Mammary epithelial cell (primary cell): ENCODE measurements at regions of chr5 and their contacts with region 1.

Region 1: GRCh38 chr5:143403593-143404415 is at the start of gene NR3C1:
- DNase-seq: peak; percentile 83
- H3K4me3 ChIP-seq: peak within 1 kb of the TSS; percentile 78 to 94 (median 83)
- H3K27ac ChIP-seq: peak within 1 kb of the TSS; percentile 97
- H3K4me1 ChIP-seq: peaks cover 11% of the 10 kb centered on the region
- H3K27me3 ChIP-seq: no peaks in the 10 kb centered on the region
- CTCF ChIP-seq: peak; percentile 10 to 42
- total RNA-seq, gene NR3C1: 62.8 to 64.4 TPM

Region 2: GRCh38 chr5:142922223-142922952 is 481.4 kb before region 1 on chr5:
- CTCF ChIA-PET with region 1: no interaction called
- dilution Hi-C with region 1: no loop called
- in situ Hi-C with region 1: loop called in 1 of 2 experiments (anchors 25 kb)
- intact Hi-C with region 1: loop called (anchors 1 kb)
- DNase-seq: no peak
- H3K4me3 ChIP-seq: no peak overlapping the region
- H3K27ac ChIP-seq: no peak overlapping the region
- H3K4me1 ChIP-seq: peaks cover 14% of the 10 kb centered on the region
- H3K27me3 ChIP-seq: no peaks in the 10 kb centered on the region
- CTCF ChIP-seq: peak; percentile 32 to 41

Region 3: DNA sequence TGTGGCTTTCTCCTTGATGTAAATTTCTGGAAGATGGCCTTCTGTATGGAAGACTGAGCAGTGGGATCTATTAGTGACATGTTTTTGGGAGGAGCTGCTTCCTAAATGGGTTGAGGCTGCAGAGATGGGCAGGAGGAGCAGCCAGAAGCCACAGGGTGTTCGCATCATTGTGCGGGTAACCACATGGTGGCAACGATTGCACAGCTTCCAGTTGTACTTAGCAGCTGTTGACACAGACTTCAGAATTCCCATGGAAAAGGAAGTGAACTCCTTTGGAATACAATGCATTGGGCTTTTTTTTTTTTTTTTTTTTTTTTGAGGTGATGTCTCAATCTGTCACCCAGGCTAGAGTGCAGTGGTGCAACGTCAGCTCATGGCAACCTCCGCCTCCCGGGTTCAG is 297.6 kb before region 1 on chr5:
- CTCF ChIA-PET with region 1: interaction called, 40 read pairs
- dilution Hi-C with region 1: no loop called
- in situ Hi-C with region 1: no loop called
- intact Hi-C with region 1: loop called (anchors 5 kb)
- DNase-seq: peak; percentile 53
- H3K4me3 ChIP-seq: no peak overlapping the region
- H3K27ac ChIP-seq: no peak overlapping the region
- H3K4me1 ChIP-seq: no peaks in the 10 kb centered on the region
- H3K27me3 ChIP-seq: no peaks in the 10 kb centered on the region
- CTCF ChIP-seq: peak in 1 of 2 donors; percentile 32

Region 4: GRCh38 chr5:143244000-143244736 is 159.6 kb before region 1 on chr5:
- CTCF ChIA-PET with region 1: no interaction called
- dilution Hi-C with region 1: no loop called
- in situ Hi-C with region 1: no loop called
- intact Hi-C with region 1: loop called (anchors 2 kb)
- DNase-seq: peak; percentile 95
- H3K4me3 ChIP-seq: peak overlapping the region; percentile 15 to 35 (median 31)
- H3K27ac ChIP-seq: peak overlapping the region; percentile 99
- H3K4me1 ChIP-seq: peaks cover 55% of the 10 kb centered on the region
- H3K27me3 ChIP-seq: no peaks in the 10 kb centered on the region
- CTCF ChIP-seq: no peak

Region 5: DNA sequence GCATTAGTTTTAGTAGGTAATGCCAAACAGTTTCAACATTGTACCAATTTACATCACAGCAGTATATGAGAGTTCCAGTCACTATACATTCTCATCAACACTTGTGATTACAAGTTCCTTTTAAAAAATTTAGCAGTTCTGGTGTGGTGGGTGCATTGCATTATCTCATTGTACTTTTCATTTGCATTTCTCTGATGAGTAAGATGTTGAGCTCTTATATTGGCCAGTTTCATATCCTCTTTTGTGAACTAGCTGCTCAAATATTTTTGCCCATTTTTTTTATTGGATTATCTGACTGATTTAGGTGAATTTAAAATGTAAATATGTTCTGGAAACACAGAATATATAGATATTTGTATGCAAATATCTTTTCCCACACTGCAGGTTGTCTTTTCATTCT is 160.6 kb after region 1 on chr5:
- CTCF ChIA-PET with region 1: no interaction called
- dilution Hi-C with region 1: no loop called
- in situ Hi-C with region 1: no loop called
- intact Hi-C with region 1: no loop called
- DNase-seq: no peak
- H3K4me3 ChIP-seq: no peak overlapping the region
- H3K27ac ChIP-seq: no peak overlapping the region
- H3K4me1 ChIP-seq: peaks cover 2% of the 10 kb centered on the region
- H3K27me3 ChIP-seq: peaks cover 2% of the 10 kb centered on the region
- CTCF ChIP-seq: no peak

Region 6: DNA sequence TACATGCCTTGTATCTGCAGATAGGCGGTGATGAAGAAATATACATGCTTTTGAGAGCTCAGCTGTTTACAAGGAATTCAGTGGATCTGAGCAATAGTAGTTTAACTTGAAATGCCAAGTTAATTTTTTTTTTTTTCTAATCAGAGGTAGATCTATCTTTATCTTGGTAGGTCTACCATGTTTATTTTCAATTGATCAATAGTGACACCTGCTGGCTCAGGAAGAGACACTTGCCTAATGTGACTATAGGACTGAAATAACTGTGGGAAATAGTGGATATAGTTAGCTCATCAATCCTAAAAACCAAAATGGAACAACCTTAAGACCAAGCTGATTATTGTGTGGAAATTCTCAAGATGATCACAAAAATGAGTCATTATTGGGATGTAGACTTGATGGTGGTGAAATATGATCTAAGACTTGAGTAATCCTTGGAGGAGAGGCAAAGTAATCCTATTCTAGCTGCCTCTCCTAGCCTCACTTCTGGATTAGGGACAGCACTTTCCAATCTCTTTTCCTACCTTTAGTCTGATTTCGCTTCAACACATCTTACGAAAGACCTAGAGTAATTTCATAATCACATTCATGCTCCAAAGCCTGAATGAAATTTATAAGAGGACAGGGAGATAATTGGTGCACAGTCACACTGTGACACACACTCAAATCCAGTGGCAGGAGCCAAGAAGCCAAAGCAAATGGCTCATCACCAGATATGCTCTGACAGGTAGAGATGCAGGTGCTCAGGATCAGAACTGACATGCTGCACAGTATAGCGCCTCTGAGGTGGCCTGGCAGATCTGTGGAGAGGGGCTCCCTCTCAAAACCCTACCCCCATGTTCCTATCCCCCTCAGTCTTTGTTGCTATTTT is 564.4 kb after region 1 on chr5:
- CTCF ChIA-PET with region 1: no interaction called
- dilution Hi-C with region 1: no loop called
- in situ Hi-C with region 1: no loop called
- intact Hi-C with region 1: loop called (anchors 2 kb)
- DNase-seq: peak; percentile 70
- H3K4me3 ChIP-seq: no peak overlapping the region
- H3K27ac ChIP-seq: no peak overlapping the region
- H3K4me1 ChIP-seq: peaks cover 7% of the 10 kb centered on the region
- H3K27me3 ChIP-seq: no peaks in the 10 kb centered on the region
- CTCF ChIP-seq: peak; percentile 39 to 59